GM12878 (cell line): ENCODE measurements at regions of chr19 and their contacts with region 1.

Region 1: DNA sequence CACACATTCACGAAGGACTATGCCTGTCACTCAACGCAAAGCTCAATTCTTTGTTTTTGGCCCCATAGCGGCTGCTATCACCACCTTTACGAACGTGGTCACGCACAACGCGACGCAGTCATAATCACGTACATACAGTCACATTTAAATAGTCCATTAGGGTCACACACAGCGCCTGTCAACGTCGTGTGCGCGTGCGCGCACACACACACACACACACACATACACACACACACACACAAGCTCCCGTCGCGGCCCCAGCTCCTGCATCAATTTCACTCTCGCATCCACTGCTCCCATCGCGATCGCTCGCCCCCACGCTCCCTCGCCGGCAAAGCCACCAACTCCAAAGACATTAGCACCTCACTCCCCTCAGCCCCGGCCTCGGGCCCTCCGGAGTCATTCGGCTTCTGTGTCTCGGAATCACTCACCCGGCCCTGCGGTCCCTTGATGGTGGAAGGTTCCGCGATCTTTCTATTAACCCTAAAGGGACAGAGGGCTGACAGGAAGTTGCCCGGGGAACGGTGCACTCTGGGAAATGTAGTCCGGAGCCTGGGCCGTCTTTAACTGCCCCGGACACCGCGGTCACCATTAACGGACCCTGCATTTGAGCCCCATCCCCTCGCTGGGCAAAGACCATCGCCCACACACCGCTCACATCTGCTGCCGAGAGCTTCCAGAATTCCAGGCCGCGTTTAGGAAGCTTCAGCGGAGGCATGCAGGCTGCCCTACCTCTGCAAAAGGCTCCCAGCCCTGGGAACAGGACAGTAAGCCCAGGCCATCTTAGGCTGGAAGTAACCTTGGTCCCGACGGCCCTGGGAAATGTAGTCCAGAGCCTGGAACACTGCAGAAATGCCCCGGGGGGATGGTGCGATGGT is at the start of gene ZNF790:
- DNase-seq: peak; percentile 53
- ATAC-seq: peak; percentile 97
- H3K4me3 ChIP-seq: peak within 1 kb of the TSS; percentile 79
- H3K27ac ChIP-seq: peak within 1 kb of the TSS; percentile 69
- H3K4me1 ChIP-seq: 0 out of 2 replicates have a peak, but pooled peaks cover 3% of the 10 kb centered on the region
- H3K27me3 ChIP-seq: no peaks in the 10 kb centered on the region
- CTCF ChIP-seq: no peak
- EP300 ChIP-seq: no peak
- POLR2A ChIP-seq: peak; percentile 82
- RAD21 ChIP-seq: no peak
- polyA plus RNA-seq, gene ZNF790: 1.6 to 2.5 TPM

Region 2: GRCh38 chr19:36797786-36798108 is 40.4 kb before region 1 on chr19:
- CTCF ChIA-PET with region 1: no interaction called
- POLR2A ChIA-PET with region 1: no interaction called
- RAD21 ChIA-PET with region 1: no interaction called
- SMC1A ChIA-PET with region 1: no interaction called
- in situ Hi-C with region 1: no loop called
- intact Hi-C with region 1: no loop called
- DNase-seq: no peak
- ATAC-seq: no peak
- H3K4me3 ChIP-seq: peak overlapping the region; percentile 73
- H3K27ac ChIP-seq: peak overlapping the region; percentile 53; the same call in 1 of the 2 replicates
- H3K4me1 ChIP-seq: no peaks in the 10 kb centered on the region
- H3K27me3 ChIP-seq: no peaks in the 10 kb centered on the region
- CTCF ChIP-seq: no peak
- EP300 ChIP-seq: no peak
- POLR2A ChIP-seq: no peak
- RAD21 ChIP-seq: no peak

Region 3: DNA sequence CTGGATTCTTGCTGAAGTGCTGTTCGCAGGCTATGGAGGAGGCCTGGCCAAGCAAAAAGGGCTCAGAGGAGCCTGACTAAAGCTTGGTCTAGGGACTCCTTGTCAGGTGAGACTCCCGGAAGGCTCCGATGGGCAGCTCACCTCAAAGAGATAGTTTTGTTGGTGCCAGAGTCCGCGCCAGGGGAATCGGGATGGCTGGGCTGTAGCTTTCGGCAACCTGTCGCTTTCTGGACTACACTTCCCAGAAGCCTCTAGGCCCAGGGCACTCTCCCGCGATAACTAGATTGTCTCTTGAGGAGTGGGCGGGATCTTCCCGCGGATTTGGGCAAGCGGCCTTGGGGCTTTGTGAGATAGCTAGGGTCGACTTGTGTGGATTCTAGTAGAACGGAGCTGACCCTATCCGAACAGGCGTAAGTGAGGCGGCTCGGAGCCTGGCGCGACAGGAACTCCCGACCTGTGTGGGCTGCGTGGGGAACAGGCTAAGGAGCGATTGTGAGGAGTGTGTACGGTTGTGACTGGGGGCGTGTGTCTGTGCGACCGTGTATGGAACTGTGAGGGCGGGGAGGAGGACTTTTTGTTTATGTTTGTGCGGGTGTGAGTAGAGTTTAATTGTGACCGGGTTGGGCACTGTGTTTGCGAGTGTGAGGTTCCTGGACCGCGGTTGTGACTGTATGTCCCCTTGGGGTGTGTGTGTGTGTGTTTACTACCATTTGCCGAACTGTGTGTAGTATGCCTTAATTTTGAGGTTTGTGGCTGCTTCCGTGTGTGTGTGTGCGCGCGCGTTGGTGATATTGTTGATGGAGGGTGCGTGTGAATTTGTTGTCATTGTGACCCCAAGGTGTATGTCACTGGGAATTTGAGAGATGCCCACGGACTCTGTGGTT is 12.7 kb after region 1 on chr19 and contains the start of gene ZNF345:
- CTCF ChIA-PET with region 1: interaction called, 4 read pairs
- POLR2A ChIA-PET with region 1: interaction called, 37 read pairs
- RAD21 ChIA-PET with region 1: interaction called, 38 read pairs
- SMC1A ChIA-PET with region 1: interaction called, 37 read pairs
- in situ Hi-C with region 1: no loop called
- intact Hi-C with region 1: loop called (anchors 1 kb)
- DNase-seq: peak; percentile 64
- ATAC-seq: peak; percentile 91
- H3K4me3 ChIP-seq: peak within 1 kb of the TSS; percentile 72
- H3K27ac ChIP-seq: peak within 1 kb of the TSS; percentile 75
- H3K4me1 ChIP-seq: peaks cover 4% of the 10 kb centered on the region; the same call in 1 of the 2 replicates
- H3K27me3 ChIP-seq: no peaks in the 10 kb centered on the region
- CTCF ChIP-seq: no peak
- EP300 ChIP-seq: no peak
- POLR2A ChIP-seq: peak; percentile 81
- RAD21 ChIP-seq: no peak
- polyA plus RNA-seq, gene ZNF345: 1.3 to 1.5 TPM